Heart right ventricle (tissue), 16 donors: ENCODE measurements at regions of chrX and their contacts with region 1.

Region 1: GRCh38 chrX:153494541-153495361 is at the start of gene BGN:
- DNase-seq: peak; percentile 47 to 59
- ATAC-seq: peak; percentile 31 to 71 (median 64)
- H3K4me3 ChIP-seq: peak within 1 kb of the TSS; percentile 10 to 58 (median 50)
- H3K27ac ChIP-seq: peak within 1 kb of the TSS in 9 of 10 donors; percentile 52 to 81 (median 71)
- H3K4me1 ChIP-seq: peaks cover 0 to 21% (median 5%) of the 10 kb centered on the region in 9 donors
- H3K27me3 ChIP-seq: peaks cover 0 to 18% (median 0%) of the 10 kb centered on the region in 7 donors
- CTCF ChIP-seq: peak in 7 of 9 donors; percentile 8 to 58 (median 41)
- total RNA-seq, gene BGN: 38.7 to 202 (median 62.4) TPM

Region 2: DNA sequence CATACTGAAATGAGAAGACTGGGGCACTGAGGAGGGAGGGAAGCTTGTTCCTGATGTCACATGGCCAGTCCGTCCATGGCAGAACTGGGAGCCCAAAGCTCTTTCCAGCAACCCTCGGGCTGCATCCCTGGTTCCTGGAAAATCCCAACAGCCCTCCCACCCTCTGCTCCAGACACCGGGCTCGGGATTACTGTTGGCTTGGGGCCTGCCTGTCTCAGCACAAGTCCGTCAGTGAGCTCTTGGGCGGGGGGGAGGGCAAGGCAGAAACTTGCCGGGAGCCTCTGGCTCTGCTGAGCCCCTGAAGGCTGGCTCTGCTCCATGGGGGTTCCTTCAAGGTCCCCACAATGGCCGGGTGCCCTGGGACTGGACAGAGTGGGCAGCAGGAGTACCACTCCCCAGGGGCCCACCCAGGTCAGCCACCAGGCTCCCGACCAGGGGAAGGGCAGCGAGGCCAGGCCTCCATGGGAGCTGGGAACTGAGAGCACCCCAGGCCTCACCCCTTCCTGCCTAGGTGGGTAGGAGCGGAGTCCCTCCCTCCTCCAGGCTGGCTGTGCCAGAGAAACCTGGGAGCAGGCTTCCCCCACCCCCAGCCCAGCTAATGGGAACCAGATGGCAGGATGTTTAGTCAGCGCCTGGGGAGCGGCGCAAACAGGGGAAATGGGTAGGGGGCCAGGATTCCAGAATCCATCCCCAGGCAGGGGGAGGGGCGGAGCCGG is 17.9 kb before region 1 on chrX:
- intact Hi-C with region 1: loop called in 1 of 10 experiments (anchors 2 kb)
- DNase-seq: peak; percentile 43 to 52
- ATAC-seq: peak; percentile 43 to 79 (median 62)
- H3K4me3 ChIP-seq: no peak overlapping the region
- H3K27ac ChIP-seq: peak overlapping the region in 9 of 10 donors; percentile 29 to 84 (median 79)
- H3K4me1 ChIP-seq: peaks cover 0 to 36% (median 15%) of the 10 kb centered on the region in 9 donors
- H3K27me3 ChIP-seq: peaks cover 0 to 15% (median 0%) of the 10 kb centered on the region in 7 donors
- CTCF ChIP-seq: no peak

Region 3: DNA sequence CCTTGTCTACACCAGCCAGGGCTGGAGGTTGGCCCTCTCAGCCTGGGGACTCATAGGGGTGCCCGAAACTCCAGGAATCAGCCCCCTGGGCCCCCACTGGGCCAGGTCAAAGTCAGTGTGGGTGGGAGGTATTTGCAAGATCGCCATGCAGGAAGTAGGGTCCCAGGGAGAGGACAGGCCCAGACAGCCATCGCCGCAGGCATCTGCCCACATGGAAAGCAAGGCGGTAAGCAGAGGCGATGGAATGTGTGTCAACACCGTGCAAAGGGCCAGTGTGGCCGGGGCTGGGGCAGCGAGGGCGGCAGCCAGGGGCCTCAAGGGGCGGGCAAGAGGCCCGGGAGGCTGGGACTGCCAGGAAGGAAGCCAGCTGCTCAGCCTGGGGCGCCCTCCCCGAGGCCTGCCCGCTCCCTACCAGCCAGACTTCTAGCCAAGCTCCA is 132.9 kb after region 1 on chrX:
- intact Hi-C with region 1: no loop called
- DNase-seq: no peak
- ATAC-seq: peak in 1 of 8 donors; percentile 29
- H3K4me3 ChIP-seq: no peak overlapping the region
- H3K27ac ChIP-seq: no peak overlapping the region
- H3K4me1 ChIP-seq: no peaks in the 10 kb centered on the region
- H3K27me3 ChIP-seq: peaks cover 0 to 30% (median 0%) of the 10 kb centered on the region in 7 donors
- CTCF ChIP-seq: no peak